Endothelial cell of umbilical vein (primary cell): ENCODE measurements at regions of chr3 and their contacts with region 1.

Region 1: DNA sequence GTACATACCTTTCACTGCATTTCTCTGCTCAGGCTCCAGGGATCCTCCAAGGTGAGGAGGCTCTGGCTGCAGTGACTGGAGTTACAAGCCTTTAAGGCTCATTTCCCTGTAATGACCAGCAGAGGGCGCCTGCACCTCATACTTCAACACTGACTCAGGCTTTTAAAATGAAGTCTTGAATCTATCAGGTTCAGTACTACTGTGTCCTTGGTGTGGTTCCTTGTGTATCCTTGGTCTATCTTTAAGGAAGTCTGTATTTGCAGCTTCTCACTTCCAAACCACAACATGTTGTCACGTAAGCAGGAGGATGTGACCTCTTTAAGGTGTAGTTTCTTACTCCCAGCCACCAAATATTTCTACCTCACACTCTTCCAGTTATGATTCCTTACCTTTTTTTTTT is 122.5 kb upstream of the ZBED2 start:
- DNase-seq: peak; percentile 83
- H3K4me3 ChIP-seq: no peak overlapping the region
- H3K27ac ChIP-seq: peak overlapping the region; percentile 18
- H3K4me1 ChIP-seq: peaks cover 6% of the 10 kb centered on the region
- H3K27me3 ChIP-seq: no peaks in the 10 kb centered on the region
- CTCF ChIP-seq: peak; percentile 81 to 82
- POLR2A ChIP-seq: no peak

Region 2: DNA sequence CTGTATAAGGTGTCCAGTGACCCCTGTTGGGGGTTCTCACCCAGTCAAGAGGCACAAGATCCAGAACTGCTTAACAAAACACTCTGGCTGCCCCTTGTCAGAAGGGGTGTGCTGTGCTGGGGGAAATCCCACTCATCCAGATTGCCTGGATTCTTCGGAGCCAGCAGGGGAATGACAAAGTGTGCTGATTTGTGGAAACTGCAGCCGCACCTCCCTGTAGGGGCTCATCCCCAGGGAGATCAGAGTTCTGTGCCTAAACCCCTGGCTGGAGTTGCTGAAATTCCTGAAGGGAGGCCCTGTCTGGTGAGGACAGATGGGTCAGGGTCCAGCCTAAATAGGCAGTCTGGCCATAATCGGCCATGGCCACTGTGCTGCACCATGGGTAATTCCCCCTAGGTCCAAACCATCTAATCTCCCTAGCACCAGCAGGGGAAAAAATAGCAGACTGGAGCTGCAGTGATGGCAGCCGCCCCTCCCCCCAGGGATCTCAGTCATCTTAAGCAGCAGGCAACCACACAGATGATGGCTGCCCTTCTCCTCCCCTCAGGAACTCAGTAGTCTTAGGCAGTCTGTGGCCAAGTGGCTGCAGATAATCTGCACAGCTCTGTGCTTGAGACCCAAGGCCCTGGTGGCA is 244.2 kb before region 1 on chr3:
- CTCF ChIA-PET with region 1: no interaction called
- POLR2A ChIA-PET with region 1: no interaction called
- dilution Hi-C with region 1: no loop called
- intact Hi-C with region 1: no loop called
- DNase-seq: no peak
- H3K4me3 ChIP-seq: no peak overlapping the region
- H3K27ac ChIP-seq: no peak overlapping the region
- H3K4me1 ChIP-seq: no peaks in the 10 kb centered on the region
- H3K27me3 ChIP-seq: no peaks in the 10 kb centered on the region
- CTCF ChIP-seq: no peak
- POLR2A ChIP-seq: no peak

Region 3: DNA sequence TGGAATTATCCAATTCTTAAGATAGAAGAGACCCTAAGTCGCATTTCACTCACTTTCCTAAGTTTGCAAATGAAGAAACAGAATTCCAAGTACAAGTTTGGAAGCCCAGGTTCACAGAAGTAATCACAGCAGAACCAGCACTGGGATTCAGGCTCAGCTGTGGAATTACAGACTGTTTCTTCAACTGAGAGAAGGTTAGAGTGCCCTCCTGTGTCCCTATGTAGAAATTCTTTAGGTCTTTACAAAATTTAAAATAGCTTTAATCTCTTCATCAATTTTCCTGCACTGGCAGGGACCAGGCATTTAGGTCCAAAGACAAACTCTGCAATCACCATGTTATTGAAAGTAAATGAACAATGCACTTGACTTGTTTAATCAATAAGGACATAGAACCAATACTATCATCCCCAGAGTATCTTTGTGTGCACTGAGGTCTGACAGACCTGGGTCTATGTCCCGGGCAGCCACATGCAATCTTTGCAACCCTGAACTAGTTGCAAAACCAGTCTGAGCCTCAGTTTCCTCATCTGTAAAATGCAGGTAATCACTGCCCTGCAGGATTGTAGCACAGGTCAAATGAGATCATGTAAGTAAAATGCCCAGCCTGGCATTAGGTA is 26.2 kb before region 1 on chr3:
- CTCF ChIA-PET with region 1: interaction called, 30 read pairs
- POLR2A ChIA-PET with region 1: no interaction called
- dilution Hi-C with region 1: no loop called
- intact Hi-C with region 1: no loop called
- DNase-seq: peak; percentile 53
- H3K4me3 ChIP-seq: no peak overlapping the region
- H3K27ac ChIP-seq: no peak overlapping the region
- H3K4me1 ChIP-seq: peaks cover 12% of the 10 kb centered on the region
- H3K27me3 ChIP-seq: no peaks in the 10 kb centered on the region
- CTCF ChIP-seq: peak; percentile 17 to 40
- POLR2A ChIP-seq: no peak

Region 4: GRCh38 chr3:111761309-111761831 is 43.8 kb after region 1 on chr3:
- CTCF ChIA-PET with region 1: interaction called, 10 read pairs
- POLR2A ChIA-PET with region 1: no interaction called
- dilution Hi-C with region 1: no loop called
- intact Hi-C with region 1: no loop called
- DNase-seq: peak; percentile 29
- H3K4me3 ChIP-seq: no peak overlapping the region
- H3K27ac ChIP-seq: no peak overlapping the region
- H3K4me1 ChIP-seq: no peaks in the 10 kb centered on the region
- H3K27me3 ChIP-seq: no peaks in the 10 kb centered on the region
- CTCF ChIP-seq: no peak
- POLR2A ChIP-seq: no peak

Region 5: DNA sequence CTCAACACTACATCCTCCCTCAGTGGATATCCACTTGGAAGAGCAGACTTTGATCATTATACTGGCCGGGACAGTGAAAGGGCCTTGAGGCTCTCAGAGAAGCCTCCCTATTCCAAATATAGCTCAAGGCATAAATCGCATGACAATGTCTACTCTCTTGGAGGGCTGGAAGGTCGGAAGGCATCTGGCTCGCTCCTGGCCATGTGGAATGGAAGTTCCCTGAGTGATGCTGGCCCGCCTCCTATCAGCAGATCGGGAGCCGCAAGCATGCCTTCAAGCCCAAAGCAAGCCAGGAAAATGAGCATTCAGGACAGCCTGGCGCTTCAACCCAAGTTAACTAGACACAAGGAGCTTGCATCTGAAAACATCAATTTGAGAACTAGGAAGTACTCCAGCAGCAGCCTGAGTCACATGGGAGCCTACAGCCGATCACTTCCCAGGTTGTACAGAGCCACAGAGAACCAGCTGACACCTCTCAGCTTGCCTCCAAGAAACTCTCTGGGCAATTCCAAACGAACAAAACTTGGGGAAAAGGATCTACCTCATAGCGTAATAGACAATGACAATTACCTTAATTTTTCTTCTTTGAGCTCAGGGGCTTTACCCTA is 166.9 kb after region 1 on chr3:
- CTCF ChIA-PET with region 1: interaction called, 35 read pairs
- POLR2A ChIA-PET with region 1: no interaction called
- dilution Hi-C with region 1: no loop called
- intact Hi-C with region 1: no loop called
- DNase-seq: no peak
- H3K4me3 ChIP-seq: no peak overlapping the region
- H3K27ac ChIP-seq: no peak overlapping the region
- H3K4me1 ChIP-seq: peaks cover 9% of the 10 kb centered on the region
- H3K27me3 ChIP-seq: no peaks in the 10 kb centered on the region
- CTCF ChIP-seq: no peak
- POLR2A ChIP-seq: no peak

Region 6: GRCh38 chr3:111967651-111968274 is 250.2 kb after region 1 on chr3:
- CTCF ChIA-PET with region 1: interaction called, 192 read pairs
- POLR2A ChIA-PET with region 1: no interaction called
- dilution Hi-C with region 1: no loop called
- intact Hi-C with region 1: loop called (anchors 1 kb)
- DNase-seq: peak; percentile 84
- H3K4me3 ChIP-seq: no peak overlapping the region
- H3K27ac ChIP-seq: peak overlapping the region; percentile 88
- H3K4me1 ChIP-seq: peaks cover 26% of the 10 kb centered on the region
- H3K27me3 ChIP-seq: no peaks in the 10 kb centered on the region
- CTCF ChIP-seq: peak; percentile 78 to 87
- POLR2A ChIP-seq: no peak

Region 7: DNA sequence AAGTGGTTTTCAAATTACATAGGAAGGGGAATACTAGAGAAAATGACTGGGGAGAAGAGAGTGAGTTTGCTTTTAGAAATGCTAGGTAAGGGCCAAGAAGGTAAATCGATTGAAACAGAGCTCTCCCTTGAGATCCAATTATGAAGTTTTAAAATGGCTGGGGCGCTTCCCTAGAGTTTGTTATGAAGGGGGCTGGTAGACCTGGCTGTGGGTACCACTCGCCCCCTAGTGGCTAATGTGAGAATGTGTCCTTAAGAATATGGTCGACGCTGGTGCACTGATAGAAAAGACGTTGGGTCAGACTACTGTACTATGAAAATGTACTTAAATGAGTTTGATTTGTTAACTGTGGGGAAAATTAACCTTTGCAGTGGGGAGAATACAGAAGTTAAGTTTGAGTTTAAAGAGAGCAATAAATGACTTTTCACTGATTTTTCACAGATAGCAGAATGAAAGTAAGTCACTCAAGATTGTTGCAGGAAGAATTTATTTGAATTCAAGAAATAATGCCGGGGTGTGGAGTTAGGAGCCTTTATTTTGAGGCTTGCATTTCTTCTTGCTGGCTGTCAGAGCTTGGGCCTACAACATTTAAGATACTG is 326.1 kb after region 1 on chr3:
- CTCF ChIA-PET with region 1: interaction called, 28 read pairs
- POLR2A ChIA-PET with region 1: no interaction called
- dilution Hi-C with region 1: no loop called
- intact Hi-C with region 1: loop called (anchors 1 kb)
- DNase-seq: peak; percentile 71
- H3K4me3 ChIP-seq: no peak overlapping the region
- H3K27ac ChIP-seq: no peak overlapping the region
- H3K4me1 ChIP-seq: no peaks in the 10 kb centered on the region
- H3K27me3 ChIP-seq: no peaks in the 10 kb centered on the region
- CTCF ChIP-seq: peak; percentile 80 to 85
- POLR2A ChIP-seq: no peak